GM12878 (cell line): ENCODE measurements at regions of chr7 and their contacts with region 1.

Region 1: GRCh38 chr7:100126931-100127865 is at the start of gene MBLAC1:
- DNase-seq: peak; percentile 68
- ATAC-seq: peak; percentile 84
- H3K4me3 ChIP-seq: peak within 1 kb of the TSS; percentile 75
- H3K27ac ChIP-seq: peak within 1 kb of the TSS; percentile 99
- H3K4me1 ChIP-seq: peaks cover 17% of the 10 kb centered on the region
- H3K27me3 ChIP-seq: no peaks in the 10 kb centered on the region
- CTCF ChIP-seq: 0 out of 6 replicates have a peak, but pooled peaks of 1 of the 3 experiments have one; percentile 1
- EP300 ChIP-seq: no peak; a peak in 1 of 4 replicates
- POLR2A ChIP-seq: peak; percentile 79
- RAD21 ChIP-seq: no peak
- polyA plus RNA-seq, gene MBLAC1: 0.24 TPM in 1 of 2 experiments, not detected in the other

Region 2: GRCh38 chr7:99918959-99919813 is 208.0 kb before region 1 on chr7 and contains the start of gene TRIM4:
- CTCF ChIA-PET with region 1: interaction called, 20 read pairs
- POLR2A ChIA-PET with region 1: interaction called, 8 read pairs
- RAD21 ChIA-PET with region 1: interaction called, 24 read pairs
- SMC1A ChIA-PET with region 1: interaction called, 8 read pairs
- in situ Hi-C with region 1: no loop called
- intact Hi-C with region 1: loop called (anchors 5 kb)
- DNase-seq: peak; percentile 77
- ATAC-seq: peak; percentile 99
- H3K4me3 ChIP-seq: peak within 1 kb of the TSS; percentile 81
- H3K27ac ChIP-seq: peak within 1 kb of the TSS; percentile 79
- H3K4me1 ChIP-seq: no peaks in the 10 kb centered on the region
- H3K27me3 ChIP-seq: no peaks in the 10 kb centered on the region
- CTCF ChIP-seq: peak; percentile 24 to 28 (median 26); a peak in 4 of 6 replicates
- EP300 ChIP-seq: no peak
- POLR2A ChIP-seq: peak; percentile 99
- RAD21 ChIP-seq: 0 out of 2 replicates have a peak, but pooled peaks have one; percentile 8
- polyA plus RNA-seq, gene TRIM4: 4.8 to 6.0 TPM

Region 3: DNA sequence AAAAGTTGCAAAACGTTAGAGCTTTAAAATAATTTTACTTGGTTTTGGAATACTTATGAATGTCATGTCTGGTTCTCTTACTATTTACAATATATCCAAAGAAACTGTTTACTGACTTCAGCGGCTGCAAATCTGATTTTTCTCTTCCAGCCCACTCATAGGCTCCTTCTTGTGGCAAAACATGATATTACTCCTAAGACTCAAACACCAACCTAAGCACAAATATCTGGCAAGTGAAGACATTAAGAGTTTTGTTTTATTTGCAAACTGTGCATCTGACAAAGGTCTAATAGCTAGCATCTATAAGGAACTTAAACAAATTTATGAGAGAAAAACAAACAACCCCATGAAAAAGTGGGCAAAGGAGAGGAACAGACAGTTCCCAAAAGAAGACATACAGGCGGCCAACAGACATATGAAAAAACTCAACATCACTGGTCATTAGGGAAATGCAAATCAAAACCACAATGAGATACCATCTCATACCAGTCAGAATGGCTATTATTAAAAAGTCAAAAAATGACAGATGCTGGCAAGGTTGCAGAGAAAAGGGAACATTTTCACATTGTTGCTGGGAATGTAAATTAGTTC is 177.5 kb before region 1 on chr7:
- CTCF ChIA-PET with region 1: no interaction called
- POLR2A ChIA-PET with region 1: no interaction called
- RAD21 ChIA-PET with region 1: no interaction called
- SMC1A ChIA-PET with region 1: no interaction called
- in situ Hi-C with region 1: no loop called
- intact Hi-C with region 1: no loop called
- DNase-seq: no peak
- ATAC-seq: no peak
- H3K4me3 ChIP-seq: no peak overlapping the region
- H3K27ac ChIP-seq: no peak overlapping the region
- H3K4me1 ChIP-seq: no peaks in the 10 kb centered on the region
- H3K27me3 ChIP-seq: no peaks in the 10 kb centered on the region
- CTCF ChIP-seq: peak; percentile 22 to 31 (median 27); a peak in 5 of 6 replicates
- EP300 ChIP-seq: no peak
- POLR2A ChIP-seq: no peak
- RAD21 ChIP-seq: peak; percentile 27; the same call in 1 of the 2 replicates

Region 4: GRCh38 chr7:99990460-99990852 is 136.7 kb before region 1 on chr7:
- CTCF ChIA-PET with region 1: interaction called, 95 read pairs
- POLR2A ChIA-PET with region 1: no interaction called
- RAD21 ChIA-PET with region 1: interaction called, 31 read pairs
- SMC1A ChIA-PET with region 1: interaction called, 17 read pairs
- in situ Hi-C with region 1: no loop called
- intact Hi-C with region 1: loop called (anchors 5 kb)
- DNase-seq: no peak
- ATAC-seq: no peak
- H3K4me3 ChIP-seq: no peak overlapping the region
- H3K27ac ChIP-seq: no peak overlapping the region
- H3K4me1 ChIP-seq: no peaks in the 10 kb centered on the region
- H3K27me3 ChIP-seq: peaks cover 0 to 2% of the 10 kb centered on the region in 2 experiments; a peak in 3 of 4 replicates
- CTCF ChIP-seq: no peak
- EP300 ChIP-seq: no peak
- POLR2A ChIP-seq: no peak
- RAD21 ChIP-seq: no peak

Region 5: GRCh38 chr7:100101016-100101862 is 26.0 kb before region 1 on chr7 and contains the starts of genes AP4M1 and MCM7:
- CTCF ChIA-PET with region 1: interaction called, 11 read pairs
- POLR2A ChIA-PET with region 1: interaction called, 18 read pairs
- RAD21 ChIA-PET with region 1: interaction called, 9 read pairs
- SMC1A ChIA-PET with region 1: interaction called, 14 read pairs
- in situ Hi-C with region 1: no loop called
- intact Hi-C with region 1: loop called (anchors 1 kb)
- DNase-seq: peak; percentile 92
- ATAC-seq: peak; percentile 94
- H3K4me3 ChIP-seq: peak within 1 kb of the TSS; percentile 88
- H3K27ac ChIP-seq: peak within 1 kb of the TSS; percentile 97
- H3K4me1 ChIP-seq: peaks cover 16% of the 10 kb centered on the region
- H3K27me3 ChIP-seq: no peaks in the 10 kb centered on the region
- CTCF ChIP-seq: no peak
- EP300 ChIP-seq: no peak
- POLR2A ChIP-seq: peak; percentile 82
- RAD21 ChIP-seq: no peak
- polyA plus RNA-seq, gene AP4M1: 0.77 to 2.1 TPM
- polyA plus RNA-seq, gene MCM7: 227 to 234 TPM

Region 6: GRCh38 chr7:100221231-100221718 is 94.1 kb after region 1 on chr7:
- CTCF ChIA-PET with region 1: interaction called, 107 read pairs
- POLR2A ChIA-PET with region 1: no interaction called
- RAD21 ChIA-PET with region 1: interaction called, 49 read pairs
- SMC1A ChIA-PET with region 1: interaction called, 41 read pairs
- in situ Hi-C with region 1: no loop called
- intact Hi-C with region 1: no loop called
- DNase-seq: peak; percentile 82
- ATAC-seq: peak; percentile 60
- H3K4me3 ChIP-seq: peak overlapping the region; percentile 63
- H3K27ac ChIP-seq: peak overlapping the region; percentile 99
- H3K4me1 ChIP-seq: peaks cover 44% of the 10 kb centered on the region
- H3K27me3 ChIP-seq: no peaks in the 10 kb centered on the region
- CTCF ChIP-seq: no peak
- EP300 ChIP-seq: peak; percentile 91 to 94
- POLR2A ChIP-seq: peak; percentile 84
- RAD21 ChIP-seq: no peak